ENCODE measurements at regions of chr19 and their contacts with region 1.

Region 1: DNA sequence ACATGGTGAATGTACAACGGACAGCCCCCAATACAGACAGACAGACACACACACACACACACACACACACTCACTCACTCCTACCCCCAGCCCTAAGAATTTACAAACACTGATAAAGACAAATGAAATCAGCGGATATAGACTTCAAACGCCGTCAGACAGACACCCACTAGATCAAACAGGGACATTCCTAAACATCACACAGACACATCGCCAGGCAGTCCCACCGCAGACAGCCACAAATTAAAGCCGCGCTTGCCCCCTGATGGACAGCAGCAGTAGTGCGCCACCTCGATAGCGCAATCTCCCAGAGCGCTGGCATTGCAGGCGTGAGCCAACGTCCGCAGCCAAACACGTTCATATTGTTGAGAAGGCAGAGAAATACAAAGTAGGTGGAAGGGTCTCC is 24.7 kb upstream of the ADGRE1 start:
- DNase-seq: peak; percentile 69
- ATAC-seq: peak; percentile 91
- H3K4me3 ChIP-seq: no peak overlapping the region
- H3K27ac ChIP-seq: no peak overlapping the region
- H3K4me1 ChIP-seq: no peaks in the 10 kb centered on the region
- H3K27me3 ChIP-seq: no peaks in the 10 kb centered on the region
- CTCF ChIP-seq: peak; percentile 88
- POLR2A ChIP-seq: no peak
- RAD21 ChIP-seq: peak; percentile 84

Region 2: GRCh38 chr19:6125571-6125989 is 737.1 kb before region 1 on chr19:
- CTCF ChIA-PET with region 1: no interaction called
- POLR2A ChIA-PET with region 1: no interaction called
- dilution Hi-C with region 1: no loop called
- in situ Hi-C with region 1: loop called (anchors 25 kb)
- intact Hi-C with region 1: no loop called
- DNase-seq: peak; percentile 77
- ATAC-seq: peak; percentile 78
- H3K4me3 ChIP-seq: no peak overlapping the region
- H3K27ac ChIP-seq: no peak overlapping the region
- H3K4me1 ChIP-seq: no peaks in the 10 kb centered on the region
- H3K27me3 ChIP-seq: no peaks in the 10 kb centered on the region
- CTCF ChIP-seq: peak; percentile 88
- POLR2A ChIP-seq: no peak
- RAD21 ChIP-seq: peak; percentile 98

Region 3: DNA sequence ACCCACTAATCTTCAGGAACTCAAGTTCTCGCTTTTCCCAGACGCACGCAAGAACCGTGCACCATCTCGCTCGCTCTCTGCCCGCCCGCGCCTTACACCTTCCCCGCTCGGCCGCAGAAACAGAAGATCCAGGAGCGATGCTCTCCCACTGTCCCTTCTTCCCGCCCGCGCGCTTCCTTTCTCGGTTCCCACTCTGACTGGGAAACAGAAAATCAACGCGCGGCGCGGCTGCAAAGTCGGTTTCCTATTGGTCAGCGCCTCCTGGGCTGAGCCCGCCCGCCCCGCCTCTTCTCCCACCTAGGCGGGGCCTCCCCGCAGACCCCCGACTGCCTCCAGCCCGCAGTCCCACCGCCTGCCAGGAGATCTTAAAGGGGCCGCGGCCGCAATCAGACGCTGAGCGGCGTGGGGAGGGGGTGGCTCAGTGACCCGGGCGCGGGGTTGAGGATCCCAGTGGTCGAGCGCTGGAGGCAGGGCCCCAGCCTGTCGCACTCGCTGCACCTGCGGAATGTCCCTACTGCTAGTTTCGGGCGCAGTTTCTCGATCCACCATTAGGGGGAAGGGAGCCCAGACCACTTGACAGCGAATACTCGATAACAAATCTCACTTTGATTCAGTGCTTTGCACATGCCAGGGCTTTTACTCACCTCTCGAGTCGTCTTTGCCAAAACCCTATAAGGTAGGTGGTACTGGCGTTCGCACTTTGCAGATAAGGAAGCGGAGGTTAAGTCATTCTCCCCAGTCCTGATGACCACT is 402.4 kb before region 1 on chr19:
- CTCF ChIA-PET with region 1: no interaction called
- POLR2A ChIA-PET with region 1: no interaction called
- dilution Hi-C with region 1: no loop called
- in situ Hi-C with region 1: no loop called
- intact Hi-C with region 1: loop called (anchors 1 kb)
- DNase-seq: peak; percentile 97
- ATAC-seq: peak; percentile 92
- H3K4me3 ChIP-seq: peak overlapping the region; percentile 61
- H3K27ac ChIP-seq: peak overlapping the region; percentile 4; the same call in 1 of the 2 replicates
- H3K4me1 ChIP-seq: peaks cover 3% of the 10 kb centered on the region; the same call in 1 of the 2 replicates
- H3K27me3 ChIP-seq: peaks cover 17% of the 10 kb centered on the region
- CTCF ChIP-seq: peak; percentile 46
- POLR2A ChIP-seq: no peak
- RAD21 ChIP-seq: no peak

Region 4: DNA sequence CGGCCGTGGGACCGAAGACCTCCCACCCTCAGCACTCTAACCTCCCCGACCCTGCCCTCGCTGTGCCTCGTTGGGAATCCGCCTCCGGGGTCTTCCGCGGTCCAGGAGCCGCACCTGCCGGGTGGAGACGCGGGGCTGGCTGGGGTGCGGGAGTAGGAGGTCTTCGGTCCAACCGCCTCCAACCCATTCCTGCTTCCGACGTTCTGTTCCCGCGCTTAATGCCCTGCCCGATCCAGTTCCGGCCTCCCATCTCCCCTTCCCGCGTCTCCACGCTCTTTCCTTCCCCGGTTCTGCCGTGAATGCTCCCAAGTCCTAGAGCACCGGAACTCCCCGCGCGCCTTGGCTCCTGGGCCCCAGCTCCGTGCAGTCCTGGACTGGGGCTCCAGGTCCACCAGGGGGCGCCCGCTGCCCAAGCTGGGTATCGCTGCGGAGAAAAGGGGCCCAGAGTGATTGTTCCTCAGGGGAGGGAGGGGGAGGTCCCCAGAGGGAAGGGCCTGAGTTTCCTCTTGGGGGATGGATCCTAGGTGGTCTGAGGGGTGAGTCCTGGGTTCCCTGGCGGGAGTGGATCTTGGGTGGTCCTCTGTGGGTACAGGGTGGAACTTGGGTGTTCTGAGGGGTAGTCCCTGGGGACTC is 345.9 kb before region 1 on chr19:
- CTCF ChIA-PET with region 1: interaction called, 5 read pairs
- POLR2A ChIA-PET with region 1: no interaction called
- dilution Hi-C with region 1: no loop called
- in situ Hi-C with region 1: loop called (anchors 5 kb)
- intact Hi-C with region 1: loop called (anchors 1 kb)
- DNase-seq: peak; percentile 62
- ATAC-seq: peak; percentile 86
- H3K4me3 ChIP-seq: peak overlapping the region; percentile 48
- H3K27ac ChIP-seq: no peak overlapping the region
- H3K4me1 ChIP-seq: no peaks in the 10 kb centered on the region
- H3K27me3 ChIP-seq: no peaks in the 10 kb centered on the region
- CTCF ChIP-seq: peak; percentile 91
- POLR2A ChIP-seq: peak; percentile 24; the same call in 1 of the 2 replicates
- RAD21 ChIP-seq: peak; percentile 86

Region 5: DNA sequence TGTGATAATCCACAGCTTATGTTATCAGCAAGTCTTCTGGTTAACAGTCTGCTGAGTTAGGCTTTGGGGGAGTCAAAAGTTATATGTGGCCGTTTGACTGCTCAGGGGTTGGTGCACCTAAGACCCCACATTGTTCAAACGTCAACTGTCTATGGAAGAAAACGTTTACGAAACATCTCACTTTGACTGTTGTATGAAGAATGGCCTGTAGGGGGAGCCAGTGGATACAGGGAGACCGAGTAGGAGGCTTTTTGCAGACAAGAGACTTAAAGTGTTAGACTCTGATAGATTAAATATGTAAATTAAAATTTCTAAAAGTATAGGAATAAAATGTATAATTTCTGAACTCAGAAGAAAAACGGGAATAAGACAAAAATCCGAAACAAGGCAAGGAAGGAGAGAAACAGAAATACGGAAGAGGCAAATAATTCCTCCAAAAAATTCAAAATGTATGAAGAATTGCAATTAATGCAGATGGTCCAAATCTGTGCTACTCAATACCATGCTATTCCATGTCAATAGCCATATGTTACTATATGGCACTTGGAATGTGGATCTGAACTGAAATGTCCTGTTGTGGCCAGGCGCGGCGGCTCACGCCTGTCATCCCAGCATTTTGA is 230.6 kb before region 1 on chr19:
- CTCF ChIA-PET with region 1: no interaction called
- POLR2A ChIA-PET with region 1: no interaction called
- dilution Hi-C with region 1: no loop called
- in situ Hi-C with region 1: loop called (anchors 5 kb)
- intact Hi-C with region 1: loop called (anchors 1 kb)
- DNase-seq: peak; percentile 64
- ATAC-seq: peak; percentile 90
- H3K4me3 ChIP-seq: no peak overlapping the region
- H3K27ac ChIP-seq: no peak overlapping the region
- H3K4me1 ChIP-seq: no peaks in the 10 kb centered on the region
- H3K27me3 ChIP-seq: no peaks in the 10 kb centered on the region
- CTCF ChIP-seq: peak; percentile 71
- POLR2A ChIP-seq: no peak
- RAD21 ChIP-seq: peak; percentile 66

Region 6: DNA sequence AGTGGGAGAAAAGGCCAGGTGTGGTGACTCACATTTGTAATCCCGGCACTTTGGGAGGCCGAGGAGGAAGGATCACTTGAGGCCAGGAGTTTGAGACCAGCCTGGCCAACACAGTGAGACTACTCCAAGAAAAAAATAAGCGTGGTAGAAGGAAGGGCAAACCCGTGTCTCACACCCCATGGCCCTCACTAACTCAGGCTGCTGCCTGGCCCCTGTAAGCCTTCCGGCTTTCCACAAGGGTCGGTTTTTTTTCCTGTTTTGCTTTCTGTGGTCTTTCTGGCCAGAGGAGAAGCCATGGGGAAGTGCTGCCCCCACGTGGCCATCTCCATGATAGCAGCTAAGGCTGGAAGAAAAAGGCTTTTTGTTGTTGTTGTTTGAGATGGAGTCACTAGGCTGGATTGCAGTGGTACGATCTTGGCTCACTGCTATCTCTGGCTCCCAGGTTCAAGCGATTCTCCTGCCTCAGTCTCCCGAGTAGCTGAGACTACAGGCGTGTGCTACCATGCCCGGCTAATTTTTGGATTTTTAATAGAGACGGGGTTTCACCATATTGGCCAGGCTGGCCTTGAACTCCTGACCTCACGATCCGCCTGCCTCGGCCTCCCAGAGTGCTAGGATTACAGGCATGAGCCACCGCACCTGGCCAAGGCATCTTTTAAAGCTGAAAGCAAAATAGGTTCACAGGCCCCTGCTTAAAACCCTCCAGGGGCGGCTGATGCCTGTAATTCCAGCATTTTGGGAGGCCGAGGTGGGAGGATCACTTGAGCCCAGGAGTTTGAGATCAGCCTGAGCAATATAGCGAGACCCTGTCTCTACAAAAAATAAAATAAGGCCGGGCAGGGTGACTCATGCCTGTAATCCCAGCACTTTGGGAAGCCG is 478.5 kb after region 1 on chr19:
- CTCF ChIA-PET with region 1: no interaction called
- POLR2A ChIA-PET with region 1: no interaction called
- dilution Hi-C with region 1: no loop called
- in situ Hi-C with region 1: no loop called
- intact Hi-C with region 1: loop called (anchors 2 kb)
- DNase-seq: peak; percentile 64
- ATAC-seq: peak; percentile 95
- H3K4me3 ChIP-seq: no peak overlapping the region
- H3K27ac ChIP-seq: no peak overlapping the region
- H3K4me1 ChIP-seq: no peaks in the 10 kb centered on the region
- H3K27me3 ChIP-seq: peaks cover 6% of the 10 kb centered on the region; the same call in 1 of the 2 replicates
- CTCF ChIP-seq: peak; percentile 97
- POLR2A ChIP-seq: peak; percentile 48; the same call in 1 of the 2 replicates
- RAD21 ChIP-seq: peak; percentile 98